CD8-positive, alpha-beta T cell (primary cell): ENCODE measurements at regions of chr2 and their contacts with region 1.

Region 1: DNA sequence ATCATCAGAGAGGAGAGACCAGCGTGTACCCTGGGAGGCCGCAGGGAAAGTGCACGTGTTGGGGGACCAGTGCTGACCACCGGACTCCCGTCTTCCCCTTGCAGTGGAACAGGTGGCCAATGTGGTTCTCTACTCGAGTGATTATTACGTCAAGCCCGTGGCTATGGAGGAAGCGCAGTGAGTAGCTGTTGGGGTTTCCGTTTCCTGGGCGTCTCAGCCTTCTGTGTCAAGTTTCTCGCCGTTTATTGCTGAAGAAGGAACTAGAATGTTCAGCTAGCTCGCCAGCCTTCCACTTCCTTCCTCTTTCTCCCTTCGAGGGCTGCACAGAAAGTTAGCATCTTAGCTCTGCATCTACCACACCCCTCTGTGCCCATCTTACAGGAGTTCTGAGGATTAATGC is 22.8 kb upstream of the DGKD start:
- DNase-seq: peak; percentile 61 to 96 (median 83)
- ATAC-seq: peak; percentile 92
- H3K4me3 ChIP-seq: peak overlapping the region; percentile 2 to 5
- H3K4me3 Mint-ChIP-seq: peak overlapping the region; percentile 29
- H3K27ac ChIP-seq: peak overlapping the region; percentile 66 to 89
- H3K27ac Mint-ChIP-seq: peak overlapping the region; percentile 96
- H3K4me1 ChIP-seq: peaks cover 53% of the 10 kb centered on the region
- H3K4me1 Mint-ChIP-seq: peaks cover 48% of the 10 kb centered on the region
- H3K27me3 ChIP-seq: no peaks in the 10 kb centered on the region
- H3K27me3 Mint-ChIP-seq: no peaks in the 10 kb centered on the region
- CTCF ChIP-seq: no peak

Region 2: DNA sequence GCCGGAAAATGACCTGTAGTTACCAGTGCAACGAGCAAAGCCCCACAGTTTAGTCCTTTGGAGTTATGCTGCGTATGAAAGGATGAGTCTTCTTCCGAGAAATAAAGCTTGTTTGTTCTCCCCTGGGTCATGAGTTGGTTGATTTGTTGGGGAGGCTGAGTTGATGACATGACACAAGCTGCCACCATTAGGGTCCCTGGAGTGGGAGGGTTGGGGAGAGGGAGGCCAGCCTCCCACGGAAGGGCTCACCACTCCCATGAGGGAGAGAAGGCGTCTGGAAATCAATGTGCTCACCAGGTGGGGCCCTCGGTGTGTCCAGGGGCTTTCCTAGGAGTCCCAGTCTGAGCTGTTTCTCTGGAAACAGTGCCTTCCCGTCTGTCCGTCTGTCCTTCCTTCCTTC is 15.4 kb after region 1 on chr2:
- CTCF ChIA-PET with region 1: interaction called, 4 read pairs
- POLR2A ChIA-PET with region 1: interaction called, 10 read pairs
- intact Hi-C with region 1: no loop called
- DNase-seq: no peak
- ATAC-seq: no peak
- H3K4me3 ChIP-seq: no peak overlapping the region
- H3K4me3 Mint-ChIP-seq: no peak overlapping the region
- H3K27ac ChIP-seq: no peak overlapping the region
- H3K27ac Mint-ChIP-seq: no peak overlapping the region
- H3K4me1 ChIP-seq: peaks cover 6% of the 10 kb centered on the region
- H3K4me1 Mint-ChIP-seq: peaks cover 21% of the 10 kb centered on the region
- H3K27me3 ChIP-seq: no peaks in the 10 kb centered on the region
- H3K27me3 Mint-ChIP-seq: no peaks in the 10 kb centered on the region
- CTCF ChIP-seq: no peak